GM23248 (cell line): ENCODE measurements at regions of chr7 and their contacts with region 1.

Region 1: GRCh38 chr7:21507626-21508343 is 35.1 kb upstream of the DNAH11 start:
- DNase-seq: peak; percentile 54
- H3K4me3 ChIP-seq: no peak overlapping the region
- H3K27ac ChIP-seq: no peak overlapping the region
- H3K4me1 ChIP-seq: no peaks in the 10 kb centered on the region
- H3K27me3 ChIP-seq: no peaks in the 10 kb centered on the region

Region 2: DNA sequence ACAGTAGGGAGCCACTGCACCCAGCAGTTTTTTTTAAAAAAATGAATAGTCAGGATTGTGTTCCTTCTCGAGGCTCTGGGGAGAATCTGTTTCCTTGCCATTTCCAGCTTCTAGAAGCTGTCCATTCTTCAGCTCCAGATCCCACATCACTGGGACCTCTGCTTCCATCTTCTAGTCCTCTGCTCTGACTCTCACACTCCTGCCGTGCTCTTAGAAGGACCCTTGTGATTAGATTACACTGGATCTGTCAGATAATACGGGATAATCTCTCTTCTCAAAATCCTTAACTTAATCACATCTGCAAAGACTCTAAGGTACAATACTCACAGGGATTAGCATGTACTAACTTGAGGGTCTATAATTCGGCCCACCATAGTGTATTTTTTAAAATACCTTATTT is 238.8 kb before region 1 on chr7:
- in situ Hi-C with region 1: loop called (anchors 5 kb)
- DNase-seq: no peak
- H3K4me3 ChIP-seq: no peak overlapping the region
- H3K27ac ChIP-seq: no peak overlapping the region
- H3K4me1 ChIP-seq: no peaks in the 10 kb centered on the region
- H3K27me3 ChIP-seq: no peaks in the 10 kb centered on the region